Activated CD4-positive, alpha-beta T cell treated with anti-CD3 and anti-CD28 coated beads, Interleukin-2, amount 10 ng/mL, durations not matched to agents 7 days and 5 days (primary cell): ENCODE measurements at regions of chr17 and their contacts with region 1.

Region 1: DNA sequence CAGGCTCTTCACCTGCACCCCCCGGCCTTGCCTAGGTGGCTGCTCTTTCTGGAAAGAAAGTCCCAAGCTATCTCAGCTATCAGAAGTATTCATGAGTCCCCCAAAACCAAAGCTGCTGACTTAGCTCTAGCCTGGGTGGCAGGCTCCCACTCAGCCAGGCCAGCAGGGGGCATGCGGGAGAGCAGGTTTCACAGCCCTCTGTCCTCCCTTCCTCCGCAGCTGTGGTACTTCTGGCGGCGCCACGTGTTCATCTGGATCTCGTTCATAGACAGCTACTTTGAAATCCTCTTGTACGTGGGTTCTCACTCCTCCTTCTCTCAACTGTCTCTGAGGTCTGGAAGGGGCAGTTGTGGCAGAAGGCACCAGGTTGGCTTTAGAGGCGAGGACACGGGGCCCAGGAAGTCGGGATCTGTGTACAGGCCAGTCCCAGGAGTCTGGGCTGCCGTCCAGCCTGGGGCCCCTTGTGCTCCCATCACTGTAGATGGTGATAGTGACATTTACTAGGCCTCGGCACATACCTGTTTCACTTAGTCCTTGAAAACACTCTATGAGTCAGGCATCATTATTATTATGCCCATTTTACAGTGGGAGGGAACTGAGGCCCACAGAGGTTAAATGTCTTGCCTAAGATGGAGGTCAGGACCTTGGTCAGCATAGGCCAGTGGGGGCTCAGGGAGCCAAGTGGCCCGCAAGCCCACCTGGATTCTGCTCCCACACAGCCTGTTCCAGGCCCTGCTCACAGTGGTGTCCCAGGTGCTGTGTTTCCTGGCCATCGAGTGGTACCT is 12.9 kb downstream of the TRPV2 start:
- DNase-seq: peak; percentile 42
- H3K4me3 Mint-ChIP-seq: no peak overlapping the region
- H3K27ac Mint-ChIP-seq: no peak overlapping the region
- H3K4me1 Mint-ChIP-seq: no peaks in the 10 kb centered on the region
- H3K27me3 Mint-ChIP-seq: no peaks in the 10 kb centered on the region

Region 2: GRCh38 chr17:16415031-16415924 is 13.0 kb before region 1 on chr17 and contains the start of gene TRPV2:
- CTCF ChIA-PET with region 1: interaction called, 17 read pairs
- POLR2A ChIA-PET with region 1: no interaction called
- DNase-seq: peak; percentile 64
- H3K4me3 Mint-ChIP-seq: peak within 1 kb of the TSS; percentile 99
- H3K27ac Mint-ChIP-seq: peak within 1 kb of the TSS; percentile 99
- H3K4me1 Mint-ChIP-seq: peaks cover 52% of the 10 kb centered on the region
- H3K27me3 Mint-ChIP-seq: no peaks in the 10 kb centered on the region
- total RNA-seq, gene TRPV2: 114 to 134 TPM